ENCODE measurements at regions of chr17 and their contacts with region 1.

Region 1: GRCh38 chr17:82751571-82752370 is at the start of gene TBCD:
- DNase-seq: peak; percentile 86 to 91 (median 89)
- H3K4me3 ChIP-seq: peak within 1 kb of the TSS; percentile 57 to 77
- H3K4me3 Mint-ChIP-seq: peak within 1 kb of the TSS; percentile 71 to 90 (median 81)
- H3K27ac ChIP-seq: peak within 1 kb of the TSS; percentile 55
- H3K27ac Mint-ChIP-seq: peak within 1 kb of the TSS in 5 of 7 donors; percentile 30 to 90 (median 66)
- H3K4me1 ChIP-seq: peaks cover 24% of the 10 kb centered on the region
- H3K4me1 Mint-ChIP-seq: peaks cover 15 to 34% (median 22%) of the 10 kb centered on the region in 4 donors
- H3K27me3 ChIP-seq: no peaks in the 10 kb centered on the region
- H3K27me3 Mint-ChIP-seq: no peaks in the 10 kb centered on the region
- total RNA-seq, gene TBCD: 257 to 263 TPM

Region 2: GRCh38 chr17:82450170-82451106 is 301.3 kb before region 1 on chr17 and contains the start of gene CYBC1:
- CTCF ChIA-PET with region 1: no interaction called
- POLR2A ChIA-PET with region 1: no interaction called
- intact Hi-C with region 1: loop called (anchors 5 kb)
- DNase-seq: peak; percentile 90 to 93 (median 93)
- H3K4me3 ChIP-seq: peak within 1 kb of the TSS; percentile 86 to 95
- H3K4me3 Mint-ChIP-seq: peak within 1 kb of the TSS; percentile 86 to 98 (median 94)
- H3K27ac ChIP-seq: peak within 1 kb of the TSS; percentile 86
- H3K27ac Mint-ChIP-seq: peak within 1 kb of the TSS; percentile 93 to 99 (median 96)
- H3K4me1 ChIP-seq: peaks cover 45% of the 10 kb centered on the region
- H3K4me1 Mint-ChIP-seq: peaks cover 22 to 48% (median 30%) of the 10 kb centered on the region in 4 donors
- H3K27me3 ChIP-seq: no peaks in the 10 kb centered on the region
- H3K27me3 Mint-ChIP-seq: no peaks in the 10 kb centered on the region
- total RNA-seq, gene CYBC1: 236 to 249 TPM

Region 3: GRCh38 chr17:82648166-82648668 is 103.6 kb before region 1 on chr17 and contains the start of gene WDR45B:
- CTCF ChIA-PET with region 1: no interaction called
- POLR2A ChIA-PET with region 1: interaction called, 3 read pairs
- intact Hi-C with region 1: loop called (anchors 1 kb)
- DNase-seq: peak; percentile 87 to 89 (median 88)
- H3K4me3 ChIP-seq: peak within 1 kb of the TSS; percentile 78 to 89
- H3K4me3 Mint-ChIP-seq: peak within 1 kb of the TSS; percentile 79 to 89 (median 84)
- H3K27ac ChIP-seq: peak within 1 kb of the TSS; percentile 93
- H3K27ac Mint-ChIP-seq: peak within 1 kb of the TSS; percentile 84 to 92 (median 89)
- H3K4me1 ChIP-seq: peaks cover 30% of the 10 kb centered on the region
- H3K4me1 Mint-ChIP-seq: peaks cover 15 to 41% (median 25%) of the 10 kb centered on the region in 4 donors
- H3K27me3 ChIP-seq: no peaks in the 10 kb centered on the region
- H3K27me3 Mint-ChIP-seq: no peaks in the 10 kb centered on the region
- total RNA-seq, gene WDR45B: 66.3 to 66.7 TPM

Region 4: DNA sequence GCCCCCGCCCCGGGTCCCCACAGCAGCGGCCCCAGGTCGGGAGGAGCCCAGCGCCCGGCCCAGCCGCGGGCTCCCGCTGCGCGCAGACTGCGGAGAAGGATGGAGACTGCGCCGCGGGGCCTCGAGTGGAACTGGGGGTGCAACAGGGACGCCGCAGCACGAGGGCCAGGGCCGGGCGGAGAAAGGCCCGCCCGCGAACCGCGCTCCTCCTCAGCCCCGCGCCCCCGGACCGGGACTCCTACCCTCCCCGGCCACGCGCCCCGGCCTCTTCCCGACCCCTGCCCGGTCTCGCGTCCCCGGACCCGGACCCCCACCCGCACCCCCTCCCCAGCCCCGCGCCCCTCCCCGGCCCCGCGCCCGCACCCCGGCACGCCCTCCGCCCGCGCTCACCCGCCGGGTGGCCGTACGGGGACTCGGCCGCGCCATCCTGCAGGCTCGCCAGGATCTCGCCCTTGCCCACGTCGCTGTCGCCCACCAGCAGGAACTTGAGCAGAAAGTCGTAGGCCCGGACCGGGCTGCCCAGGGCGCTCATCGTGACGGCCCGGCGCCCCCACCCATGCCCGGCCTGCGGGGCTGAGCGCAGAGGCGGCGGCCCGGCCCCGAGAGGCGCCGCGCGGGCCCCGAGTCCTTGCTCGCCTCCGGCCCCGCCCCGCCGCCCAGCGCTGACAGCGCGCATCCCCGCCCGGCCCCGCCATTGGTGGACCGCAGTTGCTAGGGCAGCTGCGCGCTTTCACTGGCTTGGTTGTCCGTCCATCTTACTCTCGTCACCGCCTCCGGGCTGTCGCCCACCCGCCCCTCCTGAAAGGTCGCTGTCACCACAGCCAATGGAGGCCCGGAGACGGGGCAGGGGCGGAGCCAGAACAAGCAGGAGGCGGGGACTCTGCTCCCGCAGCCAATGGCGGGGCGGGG is 53.5 kb before region 1 on chr17 and contains the start of gene RAB40B:
- CTCF ChIA-PET with region 1: no interaction called
- POLR2A ChIA-PET with region 1: no interaction called
- intact Hi-C with region 1: loop called (anchors 1 kb)
- DNase-seq: peak; percentile 99
- H3K4me3 ChIP-seq: peak within 1 kb of the TSS; percentile 12 to 57
- H3K4me3 Mint-ChIP-seq: peak within 1 kb of the TSS; percentile 84 to 96 (median 90)
- H3K27ac ChIP-seq: peak within 1 kb of the TSS; percentile 6
- H3K27ac Mint-ChIP-seq: peak within 1 kb of the TSS; percentile 20 to 95 (median 77)
- H3K4me1 ChIP-seq: peaks cover 13% of the 10 kb centered on the region
- H3K4me1 Mint-ChIP-seq: peaks cover 4 to 15% (median 10%) of the 10 kb centered on the region in 4 donors
- H3K27me3 ChIP-seq: no peaks in the 10 kb centered on the region
- H3K27me3 Mint-ChIP-seq: no peaks in the 10 kb centered on the region
- total RNA-seq, gene RAB40B: 5.1 to 5.8 TPM

Region 5: DNA sequence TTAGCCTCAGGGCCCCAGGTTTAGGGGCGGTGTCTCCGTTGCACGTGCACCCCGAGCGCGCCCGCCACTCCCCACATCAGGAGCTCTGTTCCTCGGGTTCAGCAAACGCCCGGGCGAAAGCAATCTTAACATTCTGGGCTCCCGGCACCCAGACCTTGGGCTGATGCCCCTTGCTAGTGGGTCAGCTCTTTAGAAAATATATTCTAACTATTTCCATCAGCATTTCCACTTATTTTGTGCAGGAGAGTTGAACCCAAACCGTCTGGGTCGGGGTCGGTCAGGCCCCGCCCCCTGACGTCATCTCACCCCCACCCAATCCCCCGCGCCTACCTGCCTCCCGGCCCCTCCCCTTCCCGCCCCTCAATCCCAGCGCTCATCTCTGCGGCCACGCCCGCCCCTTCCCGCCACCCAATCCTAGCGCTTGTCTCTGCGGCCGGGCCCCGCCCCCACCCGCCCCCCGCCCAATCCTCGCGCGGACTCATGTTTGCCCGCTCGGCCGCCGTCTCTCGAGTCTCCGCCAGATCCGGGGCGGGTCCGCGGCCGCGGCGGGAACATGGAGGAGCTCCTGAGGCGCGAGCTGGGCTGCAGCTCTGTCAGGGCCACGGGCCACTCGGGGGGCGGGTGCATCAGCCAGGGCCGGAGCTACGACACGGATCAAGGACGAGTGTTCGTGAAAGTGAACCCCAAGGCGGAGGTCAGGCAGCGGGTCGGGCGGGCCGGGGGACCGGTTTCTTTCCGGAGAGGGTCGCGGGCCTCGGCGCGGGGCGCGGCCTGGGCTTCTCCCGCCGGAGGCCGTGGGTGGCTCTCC is 35.4 kb before region 1 on chr17 and contains the start of gene FN3KRP:
- CTCF ChIA-PET with region 1: no interaction called
- POLR2A ChIA-PET with region 1: no interaction called
- intact Hi-C with region 1: loop called (anchors 1 kb)
- DNase-seq: peak; percentile 84 to 89 (median 87)
- H3K4me3 ChIP-seq: peak within 1 kb of the TSS; percentile 44 to 74
- H3K4me3 Mint-ChIP-seq: peak within 1 kb of the TSS; percentile 92 to 98 (median 96)
- H3K27ac ChIP-seq: peak within 1 kb of the TSS; percentile 66
- H3K27ac Mint-ChIP-seq: peak within 1 kb of the TSS; percentile 83 to 98 (median 95)
- H3K4me1 ChIP-seq: peaks cover 22% of the 10 kb centered on the region
- H3K4me1 Mint-ChIP-seq: peaks cover 11 to 33% (median 22%) of the 10 kb centered on the region in 4 donors
- H3K27me3 ChIP-seq: no peaks in the 10 kb centered on the region
- H3K27me3 Mint-ChIP-seq: peaks cover 0 to 1% of the 10 kb centered on the region in 2 donors
- total RNA-seq, gene FN3KRP: 36.6 to 37.6 TPM

Region 6: GRCh38 chr17:82775001-82775823 is 23.4 kb after region 1 on chr17:
- CTCF ChIA-PET with region 1: no interaction called
- POLR2A ChIA-PET with region 1: no interaction called
- intact Hi-C with region 1: no loop called
- DNase-seq: peak in 1 of 5 donors; percentile 31
- H3K4me3 ChIP-seq: no peak overlapping the region
- H3K4me3 Mint-ChIP-seq: peak overlapping the region in 2 of 8 donors; percentile 29 to 69
- H3K27ac ChIP-seq: no peak overlapping the region
- H3K27ac Mint-ChIP-seq: peak overlapping the region in 2 of 7 donors; percentile 41 to 77
- H3K4me1 ChIP-seq: peaks cover 9% of the 10 kb centered on the region
- H3K4me1 Mint-ChIP-seq: peaks cover 6 to 11% (median 11%) of the 10 kb centered on the region in 4 donors
- H3K27me3 ChIP-seq: no peaks in the 10 kb centered on the region
- H3K27me3 Mint-ChIP-seq: no peaks in the 10 kb centered on the region

Measured in CD4-positive, alpha-beta memory T cell (primary cell).